ENCODE measurements at regions of chr6 and their contacts with region 1.

Region 1: GRCh38 chr6:132465530-132466485 is 47.1 kb downstream of the STX7 start:
- DNase-seq: no peak
- H3K4me3 ChIP-seq: no peak overlapping the region
- H3K27ac ChIP-seq: peak overlapping the region; percentile 75
- H3K4me1 ChIP-seq: peaks cover 28% of the 10 kb centered on the region
- H3K27me3 ChIP-seq: no peaks in the 10 kb centered on the region
- CTCF ChIP-seq: no peak

Region 2: DNA sequence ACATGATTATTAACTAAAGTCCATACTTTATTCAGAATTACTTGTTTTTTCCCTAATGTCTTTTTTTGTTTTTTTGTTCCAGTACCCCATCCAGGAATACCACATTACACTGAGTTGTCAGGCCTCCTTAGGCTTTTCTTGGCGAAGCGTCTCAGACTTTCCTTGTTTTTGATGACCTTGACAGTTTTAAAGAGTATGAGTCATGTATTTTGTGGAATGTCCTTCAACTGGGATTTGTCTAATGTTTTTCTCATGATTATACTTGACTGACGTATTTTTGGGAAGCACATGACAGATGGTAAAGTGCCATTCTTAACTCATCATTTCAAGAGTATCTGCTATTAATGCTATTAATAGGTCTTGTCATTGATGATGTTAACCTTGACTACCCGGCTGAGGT is 634.4 kb before region 1 on chr6:
- CTCF ChIA-PET with region 1: no interaction called
- POLR2A ChIA-PET with region 1: no interaction called
- intact Hi-C with region 1: no loop called
- DNase-seq: no peak
- H3K4me3 ChIP-seq: no peak overlapping the region
- H3K27ac ChIP-seq: no peak overlapping the region
- H3K4me1 ChIP-seq: no peaks in the 10 kb centered on the region
- H3K27me3 ChIP-seq: no peaks in the 10 kb centered on the region
- CTCF ChIP-seq: no peak

Region 3: GRCh38 chr6:132369526-132369925 is 96.3 kb before region 1 on chr6:
- CTCF ChIA-PET with region 1: no interaction called
- POLR2A ChIA-PET with region 1: interaction called, 11 read pairs
- intact Hi-C with region 1: no loop called
- DNase-seq: no peak
- H3K4me3 ChIP-seq: no peak overlapping the region
- H3K27ac ChIP-seq: no peak overlapping the region
- H3K4me1 ChIP-seq: no peaks in the 10 kb centered on the region
- H3K27me3 ChIP-seq: no peaks in the 10 kb centered on the region
- CTCF ChIP-seq: no peak